IMR-90 (cell line): ENCODE measurements at regions of chr13 and their contacts with region 1.

Region 1: DNA sequence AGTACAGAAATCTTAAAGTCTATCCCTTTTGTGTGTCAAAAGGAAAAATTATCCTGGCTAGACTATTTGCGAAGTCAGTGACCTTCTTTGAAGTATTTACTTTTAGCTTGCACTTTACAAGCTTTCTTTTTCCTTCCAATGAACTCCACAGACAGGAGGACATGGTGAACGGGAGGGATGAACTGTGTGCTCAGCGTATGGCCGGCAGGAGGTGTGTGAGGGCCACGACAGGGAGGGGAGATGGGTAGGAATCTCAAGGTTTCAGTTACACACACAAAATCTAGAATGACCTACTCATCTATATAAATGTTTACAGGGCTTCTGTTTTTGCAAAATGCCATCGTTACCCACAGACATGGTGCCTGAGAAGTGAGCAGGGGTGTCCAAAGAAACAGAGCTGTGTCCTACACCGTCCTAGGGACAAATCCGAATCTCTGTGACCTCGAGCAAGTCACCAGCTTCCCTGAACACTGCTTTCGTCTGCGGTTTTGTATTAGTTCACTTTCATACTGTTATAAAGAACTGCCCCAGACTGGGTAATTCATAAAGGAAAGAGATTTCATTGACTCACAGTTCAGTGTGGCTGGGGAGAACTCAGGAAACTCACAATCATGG is 537.2 kb downstream of the LIG4 start:
- DNase-seq: peak; percentile 53
- ATAC-seq: peak; percentile 85
- H3K4me3 ChIP-seq: no peak overlapping the region
- H3K27ac ChIP-seq: no peak overlapping the region
- H3K4me1 ChIP-seq: peaks cover 2% of the 10 kb centered on the region; the same call in 1 of the 2 replicates
- H3K27me3 ChIP-seq: no peaks in the 10 kb centered on the region
- CTCF ChIP-seq: peak; percentile 53
- POLR2A ChIP-seq: no peak
- RAD21 ChIP-seq: peak; percentile 67

Region 2: DNA sequence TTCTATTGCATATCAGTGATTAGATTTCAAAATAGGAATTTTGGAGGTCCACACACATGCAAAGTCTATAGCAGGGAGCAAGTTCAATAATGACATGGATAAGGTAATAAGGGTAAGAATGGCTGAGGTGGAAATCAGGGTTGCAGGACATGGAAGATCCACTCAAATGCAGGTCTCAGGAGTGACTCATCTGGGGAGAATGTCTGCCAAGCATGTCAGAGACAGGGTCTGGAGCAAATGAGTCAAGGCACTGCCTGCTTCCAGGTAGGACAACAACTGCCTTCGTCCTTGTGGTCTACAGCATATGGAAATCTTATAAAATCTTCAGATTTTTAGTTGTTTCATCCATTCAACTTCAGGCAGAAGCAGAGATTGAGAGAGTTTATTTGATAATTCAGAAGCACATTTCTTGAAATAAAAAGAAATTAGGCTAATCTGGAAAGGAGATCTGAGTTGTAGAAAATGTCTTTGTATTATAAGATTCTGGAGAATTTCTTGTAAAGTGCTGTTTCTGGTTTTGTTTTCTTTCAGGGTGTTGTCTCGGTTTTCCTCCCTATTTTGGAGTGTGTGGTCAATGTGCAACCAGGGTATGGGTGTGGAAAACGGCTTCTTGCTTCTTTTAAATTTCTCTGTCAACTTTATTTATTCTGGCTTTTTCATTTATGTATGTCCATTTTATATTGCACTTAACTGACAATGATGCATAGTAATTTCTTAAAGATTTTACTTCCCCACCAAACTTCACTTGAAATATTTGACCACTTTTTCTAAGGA is 211.7 kb before region 1 on chr13:
- CTCF ChIA-PET with region 1: no interaction called
- POLR2A ChIA-PET with region 1: no interaction called
- dilution Hi-C with region 1: no loop called
- in situ Hi-C with region 1: no loop called
- intact Hi-C with region 1: no loop called
- DNase-seq: peak; percentile 62
- ATAC-seq: no peak
- H3K4me3 ChIP-seq: no peak overlapping the region
- H3K27ac ChIP-seq: no peak overlapping the region
- H3K4me1 ChIP-seq: peaks cover 7% of the 10 kb centered on the region
- H3K27me3 ChIP-seq: no peaks in the 10 kb centered on the region
- CTCF ChIP-seq: no peak
- POLR2A ChIP-seq: no peak
- RAD21 ChIP-seq: no peak

Region 3: DNA sequence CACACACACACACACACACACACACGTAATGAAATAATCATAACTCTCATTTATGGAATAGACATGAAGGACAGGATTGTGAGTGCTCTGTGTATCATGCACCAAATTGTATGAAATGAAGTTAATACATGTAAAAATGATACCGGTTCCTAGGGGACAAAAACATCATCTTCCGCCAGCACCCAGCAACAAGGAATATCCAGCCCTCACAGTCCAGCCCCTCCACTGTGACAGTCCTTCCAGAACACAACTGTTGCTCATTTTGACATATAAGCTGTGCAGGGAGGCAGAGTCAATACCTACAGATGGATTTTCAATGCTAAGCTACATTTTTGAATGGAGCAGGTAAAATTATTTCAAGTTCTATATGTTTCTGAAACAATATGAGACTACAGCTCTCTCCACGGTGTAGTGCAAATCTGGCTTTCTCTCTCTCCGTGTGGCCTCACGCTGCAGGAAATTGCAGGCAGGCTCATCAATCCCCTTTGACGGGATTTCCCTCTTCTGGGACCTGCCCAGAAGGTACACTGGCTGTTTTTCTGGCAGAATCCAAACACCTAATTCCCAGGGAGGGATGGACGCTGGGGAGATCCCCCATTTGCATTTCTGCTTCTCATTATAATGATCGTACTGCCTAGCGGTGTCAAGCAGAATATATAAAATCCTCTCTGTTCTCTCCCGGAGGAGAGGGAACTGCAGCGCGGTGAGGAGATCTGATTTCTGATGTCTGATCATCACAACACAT is 43.1 kb after region 1 on chr13:
- CTCF ChIA-PET with region 1: interaction called, 4 read pairs
- POLR2A ChIA-PET with region 1: no interaction called
- dilution Hi-C with region 1: no loop called
- in situ Hi-C with region 1: no loop called
- intact Hi-C with region 1: loop called (anchors 5 kb)
- DNase-seq: no peak
- ATAC-seq: no peak
- H3K4me3 ChIP-seq: peak overlapping the region; percentile 34
- H3K27ac ChIP-seq: no peak overlapping the region
- H3K4me1 ChIP-seq: peaks cover 2% of the 10 kb centered on the region; the same call in 1 of the 2 replicates
- H3K27me3 ChIP-seq: no peaks in the 10 kb centered on the region
- CTCF ChIP-seq: no peak
- POLR2A ChIP-seq: no peak
- RAD21 ChIP-seq: no peak

Region 4: DNA sequence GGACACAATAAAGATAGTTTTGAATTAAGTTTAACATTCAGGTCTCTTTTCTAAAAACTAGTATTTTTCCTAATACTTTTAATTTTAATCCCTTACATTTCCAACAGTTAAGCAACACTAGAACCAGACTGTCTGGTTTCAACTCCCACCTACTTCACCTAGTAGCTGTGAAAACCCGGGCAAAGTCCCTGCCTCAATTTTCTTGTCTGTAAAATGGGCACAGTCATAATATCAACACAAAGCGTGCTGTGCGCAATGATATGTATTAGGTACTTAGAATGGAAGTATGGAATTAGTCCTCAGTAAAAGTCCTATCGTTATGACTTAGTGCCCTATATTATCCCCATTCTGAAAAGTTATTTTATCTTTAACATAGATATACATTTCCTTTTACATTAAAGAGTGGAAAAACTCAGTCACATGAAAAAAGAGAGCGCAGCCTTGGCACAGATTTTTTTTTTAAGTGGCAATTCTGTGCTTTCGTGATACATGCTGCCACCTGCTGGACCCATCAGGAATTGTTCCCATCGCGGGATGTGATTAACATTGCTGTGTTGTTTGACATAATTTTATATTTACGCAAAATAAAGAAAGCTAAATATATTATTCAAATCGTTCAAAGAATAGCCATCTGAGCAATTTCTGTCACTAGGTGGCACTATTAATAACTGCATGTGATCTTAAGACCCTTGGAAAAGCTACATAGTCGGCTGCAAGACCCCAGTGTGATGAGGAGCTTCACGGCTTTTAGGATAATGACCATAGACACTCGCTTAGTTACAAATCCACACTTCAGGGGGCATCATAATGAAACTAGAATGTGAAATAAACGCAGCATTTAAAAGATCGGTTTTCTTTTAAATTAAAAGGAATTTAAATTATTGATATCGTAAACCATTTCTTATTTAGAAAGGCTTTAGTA is 477.3 kb after region 1 on chr13:
- CTCF ChIA-PET with region 1: interaction called, 5 read pairs
- POLR2A ChIA-PET with region 1: no interaction called
- dilution Hi-C with region 1: no loop called
- in situ Hi-C with region 1: no loop called
- intact Hi-C with region 1: loop called (anchors 10 kb)
- DNase-seq: peak; percentile 52
- ATAC-seq: peak; percentile 65; the same call in 1 of the 2 replicates
- H3K4me3 ChIP-seq: no peak overlapping the region
- H3K27ac ChIP-seq: no peak overlapping the region
- H3K4me1 ChIP-seq: no peaks in the 10 kb centered on the region
- H3K27me3 ChIP-seq: peaks cover 2% of the 10 kb centered on the region
- CTCF ChIP-seq: peak; percentile 85
- POLR2A ChIP-seq: no peak
- RAD21 ChIP-seq: peak; percentile 78